ENCODE measurements at regions of chr22 and their contacts with region 1.

Region 1: DNA sequence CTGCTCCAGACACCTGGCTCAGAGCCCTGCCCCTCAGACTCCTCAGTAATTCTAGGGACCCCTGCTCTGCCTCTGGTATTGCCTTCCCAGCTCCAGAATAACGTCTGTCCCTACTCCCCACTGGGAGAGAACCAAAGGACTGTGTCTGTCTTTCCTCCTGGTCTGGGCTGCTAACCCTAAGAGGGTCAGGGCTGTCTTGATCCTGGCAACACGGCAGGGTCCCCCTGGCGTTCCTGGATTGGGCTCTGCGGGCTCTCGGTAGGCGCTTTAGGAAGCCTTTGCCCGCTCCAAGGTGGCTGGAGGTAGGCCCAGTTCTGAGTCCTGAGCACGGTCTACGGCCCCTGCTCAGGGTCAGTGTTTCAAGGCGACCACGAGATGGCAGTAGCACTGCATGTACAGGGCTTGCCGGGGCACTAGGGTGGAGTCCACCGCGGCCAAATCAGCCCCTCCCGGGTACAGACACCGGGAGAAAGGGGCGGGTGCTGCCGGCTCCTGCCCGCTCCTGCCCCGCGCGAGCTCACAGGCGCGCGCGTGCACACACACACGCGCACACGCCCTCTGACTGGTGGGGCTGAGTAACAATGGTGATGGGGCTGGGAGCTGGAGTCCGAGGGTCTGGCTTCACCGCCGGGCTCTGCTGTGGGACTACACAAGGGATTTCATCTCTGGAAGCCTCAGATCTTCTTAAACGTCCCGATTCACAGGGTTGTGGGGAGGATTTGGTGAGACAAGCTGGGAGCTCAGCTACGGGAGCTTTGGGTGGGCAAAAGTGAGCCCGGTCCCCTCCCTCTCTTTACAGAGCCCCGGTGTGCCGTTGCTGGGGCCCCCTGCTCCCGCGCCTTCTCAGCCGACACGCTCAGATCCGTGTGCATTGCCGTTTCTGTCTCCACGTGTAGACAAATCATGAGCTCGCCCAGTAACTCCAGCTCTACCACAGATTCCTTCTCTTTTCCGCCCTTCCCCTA is 30.1 kb upstream of the HMOX1 start:
- DNase-seq: peak; percentile 82
- ATAC-seq: peak; percentile 64
- H3K4me3 Mint-ChIP-seq: peak overlapping the region; percentile 86
- H3K27ac Mint-ChIP-seq: peak overlapping the region; percentile 98
- H3K4me1 Mint-ChIP-seq: peaks cover 59% of the 10 kb centered on the region
- H3K27me3 Mint-ChIP-seq: no peaks in the 10 kb centered on the region
- CTCF ChIP-seq: peak; percentile 79

Region 2: DNA sequence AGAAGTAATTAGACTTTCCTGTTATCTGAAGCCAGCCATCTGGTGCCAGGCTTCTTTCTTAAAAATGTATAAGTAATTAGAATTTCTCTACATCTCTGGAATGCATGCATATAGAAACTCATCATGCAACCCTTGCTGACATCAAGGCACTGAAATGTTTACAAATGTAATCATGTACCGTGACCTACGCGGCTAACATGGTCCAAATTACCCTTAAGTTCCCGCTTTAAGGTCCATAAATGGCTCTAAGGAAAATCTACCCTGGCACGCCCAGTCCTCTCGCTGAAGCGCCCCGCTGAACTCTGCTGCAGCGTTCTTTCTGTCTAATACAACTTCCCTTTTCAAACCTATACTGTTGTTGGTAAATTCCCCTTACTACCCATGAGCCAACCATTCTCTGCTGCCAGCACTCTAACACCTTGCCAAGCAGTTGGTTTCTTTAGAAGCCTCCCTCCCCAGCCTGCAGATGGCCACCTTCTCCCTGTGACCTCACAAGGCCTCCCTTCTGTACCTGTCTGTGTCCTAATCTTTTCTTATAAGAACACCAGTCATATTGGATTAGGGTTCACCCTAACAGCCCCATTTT is 16.6 kb after region 1 on chr22:
- CTCF ChIA-PET with region 1: interaction called, 5 read pairs
- POLR2A ChIA-PET with region 1: interaction called, 12 read pairs
- intact Hi-C with region 1: loop called (anchors 1 kb)
- DNase-seq: peak; percentile 49
- ATAC-seq: peak; percentile 95
- H3K4me3 Mint-ChIP-seq: peak overlapping the region; percentile 45
- H3K27ac Mint-ChIP-seq: peak overlapping the region; percentile 88
- H3K4me1 Mint-ChIP-seq: peaks cover 60% of the 10 kb centered on the region
- H3K27me3 Mint-ChIP-seq: no peaks in the 10 kb centered on the region
- CTCF ChIP-seq: no peak

Region 3: DNA sequence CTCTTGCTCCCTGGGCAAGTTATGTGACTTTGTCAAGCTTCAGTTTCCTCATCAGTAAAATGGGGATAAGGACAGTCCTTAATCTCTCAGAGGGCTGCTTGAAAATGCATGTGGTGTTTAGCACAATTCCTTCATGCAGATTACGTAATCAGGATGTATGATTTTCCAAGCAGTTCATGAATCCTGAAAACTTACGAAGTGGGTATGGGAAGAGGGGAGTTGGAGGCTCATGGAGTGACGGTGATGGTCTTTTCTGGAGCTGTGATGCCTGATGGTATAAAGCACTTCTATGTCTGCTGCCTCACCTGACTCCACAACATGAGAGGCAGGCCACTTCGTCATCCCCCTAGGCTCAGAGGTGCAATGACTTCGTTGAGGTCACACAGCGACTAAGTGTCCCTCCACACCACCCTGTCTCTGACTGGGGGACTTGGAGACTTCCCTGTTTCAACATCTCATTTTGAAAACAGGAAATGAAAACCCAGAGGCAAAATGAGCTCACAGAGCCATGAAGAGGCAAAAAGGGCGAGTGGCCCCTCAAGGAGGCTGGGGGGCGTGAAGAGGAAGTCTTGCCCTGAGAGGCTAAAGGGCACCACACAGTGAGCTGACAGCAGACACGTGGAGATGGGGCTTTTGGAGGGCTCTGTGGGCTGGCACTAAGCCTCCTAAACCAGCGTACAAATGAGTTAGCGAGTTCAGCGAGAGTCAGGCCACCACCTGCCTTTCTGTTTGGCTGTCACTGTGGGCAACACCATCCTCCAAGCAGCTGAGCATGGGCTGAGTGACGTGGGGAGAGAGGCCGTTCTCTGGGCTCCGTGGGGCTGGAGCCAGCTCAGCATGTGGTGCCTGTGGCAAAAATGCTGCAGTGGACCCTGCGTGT is 59.2 kb after region 1 on chr22:
- CTCF ChIA-PET with region 1: interaction called, 118 read pairs
- POLR2A ChIA-PET with region 1: interaction called, 215 read pairs
- intact Hi-C with region 1: loop called (anchors 1 kb)
- DNase-seq: peak; percentile 76
- ATAC-seq: peak; percentile 88
- H3K4me3 Mint-ChIP-seq: peak overlapping the region; percentile 82
- H3K27ac Mint-ChIP-seq: peak overlapping the region; percentile 96
- H3K4me1 Mint-ChIP-seq: peaks cover 42% of the 10 kb centered on the region
- H3K27me3 Mint-ChIP-seq: no peaks in the 10 kb centered on the region
- CTCF ChIP-seq: no peak

Region 4: GRCh38 chr22:35582861-35583670 is 232.2 kb after region 1 on chr22:
- CTCF ChIA-PET with region 1: interaction called, 69 read pairs
- POLR2A ChIA-PET with region 1: interaction called, 6 read pairs
- intact Hi-C with region 1: no loop called
- DNase-seq: peak; percentile 47
- ATAC-seq: peak; percentile 86
- H3K4me3 Mint-ChIP-seq: no peak overlapping the region
- H3K27ac Mint-ChIP-seq: no peak overlapping the region
- H3K4me1 Mint-ChIP-seq: peaks cover 4% of the 10 kb centered on the region
- H3K27me3 Mint-ChIP-seq: no peaks in the 10 kb centered on the region
- CTCF ChIP-seq: peak; percentile 45

Region 5: DNA sequence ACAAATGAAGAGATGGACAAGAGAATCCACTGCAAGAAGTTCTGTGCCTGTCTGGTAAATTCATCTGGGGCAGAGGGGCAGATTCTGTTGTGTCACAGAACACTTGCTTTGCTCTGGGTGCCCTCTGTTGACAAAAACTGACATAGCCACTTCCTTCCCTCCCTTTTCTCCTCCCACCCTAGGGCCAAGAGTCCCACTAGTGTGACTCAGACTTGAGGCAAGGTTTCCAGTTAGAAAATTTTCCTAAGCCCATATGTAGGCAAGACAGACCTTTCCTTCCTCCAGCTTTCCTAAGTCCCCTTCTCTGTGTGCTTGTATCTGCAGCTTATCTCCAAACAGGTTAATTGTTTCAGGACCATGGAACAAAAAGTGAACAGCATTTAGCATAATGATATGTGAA is 571.0 kb after region 1 on chr22:
- CTCF ChIA-PET with region 1: no interaction called
- POLR2A ChIA-PET with region 1: no interaction called
- intact Hi-C with region 1: loop called (anchors 1 kb)
- DNase-seq: no peak
- ATAC-seq: peak; percentile 40
- H3K4me3 Mint-ChIP-seq: no peak overlapping the region
- H3K27ac Mint-ChIP-seq: no peak overlapping the region
- H3K4me1 Mint-ChIP-seq: no peaks in the 10 kb centered on the region
- H3K27me3 Mint-ChIP-seq: peaks cover 17% of the 10 kb centered on the region
- CTCF ChIP-seq: no peak

Region 6: DNA sequence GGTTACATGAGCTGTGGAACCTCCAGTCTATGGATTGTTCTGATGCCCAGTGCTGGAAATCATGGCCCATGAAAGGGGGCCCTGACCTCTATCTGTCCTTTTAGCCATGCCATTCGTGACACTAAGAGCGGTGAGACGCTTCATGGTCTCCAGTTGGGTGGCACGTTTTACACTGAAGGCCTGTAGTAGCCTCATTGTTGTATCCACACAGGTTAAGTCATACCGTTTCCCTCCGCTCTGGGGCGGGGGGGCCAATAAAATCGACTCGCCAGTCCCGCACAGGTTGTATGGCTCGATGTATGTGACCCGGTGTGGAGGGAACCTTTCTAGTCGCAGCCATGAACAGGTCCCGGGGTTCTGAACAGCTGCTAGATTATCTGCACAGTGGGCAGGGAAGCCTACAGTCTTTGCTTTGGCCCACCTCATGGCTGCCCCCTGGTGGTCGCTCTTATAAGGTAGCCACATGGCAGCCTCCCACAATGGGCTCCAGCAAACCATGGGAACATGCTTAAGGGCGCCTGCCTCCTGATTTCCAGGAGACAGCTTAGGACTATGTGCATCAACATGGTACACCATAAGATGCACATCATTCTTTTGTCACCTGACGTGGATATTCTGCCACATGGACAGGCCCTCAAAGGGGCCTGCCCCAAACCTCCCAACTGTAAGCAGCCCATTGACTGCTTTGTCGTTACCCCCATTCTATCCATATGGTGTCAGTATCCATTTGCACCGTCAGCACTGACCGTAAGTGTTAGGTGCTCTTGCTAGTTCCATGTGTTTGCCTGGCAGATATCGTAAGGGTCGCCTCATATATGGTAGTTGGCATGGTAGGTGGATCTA is 829.4 kb after region 1 on chr22:
- CTCF ChIA-PET with region 1: no interaction called
- POLR2A ChIA-PET with region 1: no interaction called
- intact Hi-C with region 1: loop called (anchors 1 kb)
- DNase-seq: peak; percentile 78
- ATAC-seq: peak; percentile 100
- H3K4me3 Mint-ChIP-seq: no peak overlapping the region
- H3K27ac Mint-ChIP-seq: no peak overlapping the region
- H3K4me1 Mint-ChIP-seq: peaks cover 3% of the 10 kb centered on the region
- H3K27me3 Mint-ChIP-seq: no peaks in the 10 kb centered on the region
- CTCF ChIP-seq: no peak